Activated CD4-positive, alpha-beta T cell treated with anti-CD3 and anti-CD28 coated beads for 36 hours (primary cell): ENCODE measurements at regions of chr9 and their contacts with region 1.

Region 1: GRCh38 chr9:22354699-22355384 is 91.8 kb upstream of the DMRTA1 start:
- DNase-seq: no peak
- ATAC-seq: no peak
- H3K4me3 Mint-ChIP-seq: no peak overlapping the region
- H3K27ac Mint-ChIP-seq: no peak overlapping the region
- H3K4me1 Mint-ChIP-seq: no peaks in the 10 kb centered on the region
- H3K27me3 Mint-ChIP-seq: no peaks in the 10 kb centered on the region

Region 2: DNA sequence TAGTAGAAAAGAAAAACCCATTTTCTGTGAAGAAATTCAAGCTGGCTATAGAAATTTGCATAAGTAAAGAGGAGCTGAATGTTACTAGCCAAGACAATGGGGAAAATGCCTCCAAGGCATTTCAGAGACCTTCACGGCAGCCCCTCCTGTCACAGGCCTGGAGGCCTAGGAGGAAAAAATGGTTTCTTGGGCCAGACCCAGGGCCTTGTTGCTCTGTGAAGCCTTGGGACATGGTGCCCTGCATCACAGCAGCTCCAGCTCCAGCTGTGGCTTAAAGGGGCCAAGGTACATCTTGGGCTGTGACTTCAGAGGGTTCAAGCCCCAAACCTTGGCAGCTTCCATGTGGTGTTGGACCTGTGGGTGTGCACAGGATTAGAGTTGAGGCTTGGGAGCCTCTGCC is 38.2 kb before region 1 on chr9:
- CTCF ChIA-PET with region 1: no interaction called
- POLR2A ChIA-PET with region 1: no interaction called
- intact Hi-C with region 1: no loop called
- DNase-seq: no peak
- ATAC-seq: no peak
- H3K4me3 Mint-ChIP-seq: no peak overlapping the region
- H3K27ac Mint-ChIP-seq: no peak overlapping the region
- H3K4me1 Mint-ChIP-seq: no peaks in the 10 kb centered on the region
- H3K27me3 Mint-ChIP-seq: no peaks in the 10 kb centered on the region

Region 3: DNA sequence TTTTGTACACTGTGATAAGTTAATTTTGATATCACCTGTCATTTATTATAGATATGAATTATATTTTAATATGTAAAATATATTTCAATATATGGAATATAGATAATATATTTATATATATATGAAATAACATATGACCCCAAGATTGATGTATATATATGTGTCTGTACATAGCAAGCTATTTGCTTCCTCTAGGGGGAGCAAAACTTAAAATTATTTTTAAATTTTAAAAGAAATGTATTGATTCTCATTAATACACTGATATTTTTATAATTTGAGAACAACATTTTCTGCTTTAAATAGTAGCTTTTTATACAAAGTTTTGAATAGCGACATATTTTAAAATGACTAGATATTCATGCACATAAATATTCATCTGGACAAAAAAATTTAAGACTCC is 363.8 kb after region 1 on chr9:
- CTCF ChIA-PET with region 1: no interaction called
- POLR2A ChIA-PET with region 1: no interaction called
- intact Hi-C with region 1: no loop called
- DNase-seq: no peak
- ATAC-seq: no peak
- H3K4me3 Mint-ChIP-seq: no peak overlapping the region
- H3K27ac Mint-ChIP-seq: no peak overlapping the region
- H3K4me1 Mint-ChIP-seq: no peaks in the 10 kb centered on the region
- H3K27me3 Mint-ChIP-seq: no peaks in the 10 kb centered on the region

Region 4: DNA sequence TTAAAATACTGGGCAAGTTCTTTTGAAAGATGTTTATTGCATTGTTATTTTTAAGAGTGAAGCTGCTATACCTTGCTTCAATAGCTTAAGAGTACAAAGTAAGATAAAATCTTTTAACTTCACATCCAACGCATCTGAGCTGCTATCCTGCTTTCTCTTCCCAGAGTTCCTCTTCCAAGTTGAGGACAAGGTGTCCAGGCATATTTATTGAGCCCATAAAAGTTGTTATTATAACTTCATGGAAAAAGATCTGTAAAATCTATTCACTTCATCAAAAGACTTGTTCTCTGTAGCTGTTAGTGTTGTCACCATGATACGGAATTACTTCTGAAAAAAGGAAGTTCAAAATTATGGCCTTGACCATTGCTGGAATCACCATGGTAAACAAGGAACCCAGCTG is 1777.4 kb after region 1 on chr9:
- CTCF ChIA-PET with region 1: no interaction called
- POLR2A ChIA-PET with region 1: interaction called, 10 read pairs
- intact Hi-C with region 1: no loop called
- DNase-seq: no peak
- ATAC-seq: no peak
- H3K4me3 Mint-ChIP-seq: no peak overlapping the region
- H3K27ac Mint-ChIP-seq: no peak overlapping the region
- H3K4me1 Mint-ChIP-seq: no peaks in the 10 kb centered on the region
- H3K27me3 Mint-ChIP-seq: no peaks in the 10 kb centered on the region